ENCODE measurements at regions of chr4 and their contacts with region 1.

Region 1: GRCh38 chr4:184825896-184826690 is at the start of gene ACSL1:
- DNase-seq: peak; percentile 76
- H3K4me3 Mint-ChIP-seq: peak within 1 kb of the TSS; percentile 84
- H3K27ac Mint-ChIP-seq: peak within 1 kb of the TSS; percentile 57
- H3K4me1 Mint-ChIP-seq: peaks cover 31% of the 10 kb centered on the region
- H3K27me3 Mint-ChIP-seq: no peaks in the 10 kb centered on the region
- total RNA-seq, gene ACSL1: 29.8 to 31.9 TPM

Region 2: DNA sequence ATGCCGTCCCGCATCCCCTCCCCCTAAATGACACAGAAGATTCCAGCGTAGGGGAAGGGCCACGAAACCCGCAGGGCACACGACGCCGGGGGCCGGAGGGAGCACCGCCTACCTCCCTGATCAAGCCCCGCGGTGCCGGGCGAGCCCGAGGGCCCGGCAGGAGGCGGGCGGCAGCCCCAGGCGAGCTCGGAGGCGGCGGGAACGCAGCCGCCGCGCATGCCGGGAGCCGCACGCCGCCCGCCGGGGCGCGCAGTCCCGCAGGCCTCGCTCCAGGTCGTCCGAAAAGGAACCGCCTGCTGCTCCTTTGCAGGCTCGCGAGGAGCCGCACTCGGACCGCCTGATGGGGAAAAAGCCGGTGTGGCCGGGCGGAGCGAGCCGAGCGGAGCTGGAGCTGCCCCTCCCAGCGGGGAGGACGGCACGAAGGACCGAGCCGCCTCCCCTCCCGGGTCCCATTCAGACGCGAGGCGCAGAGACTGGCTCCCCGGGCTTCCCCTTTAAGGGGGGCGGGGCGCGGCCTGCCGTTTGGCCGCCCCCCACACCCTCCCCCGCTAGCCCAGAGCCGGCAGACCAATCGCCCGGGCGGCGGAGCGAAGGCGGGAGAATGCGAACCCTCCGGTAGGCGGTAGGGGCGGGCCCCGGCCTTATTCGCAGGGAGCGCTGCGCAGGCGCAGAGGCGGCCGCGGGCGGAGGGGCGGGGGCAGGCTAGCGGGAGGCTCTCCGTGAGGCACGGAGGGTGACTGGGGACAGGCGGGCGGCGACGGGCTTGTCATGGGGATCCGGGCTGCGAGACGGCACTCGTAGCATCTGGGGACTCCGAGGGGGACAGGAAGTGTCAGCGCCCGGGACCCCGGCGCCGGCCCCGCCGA is 1321.8 kb before region 1 on chr4:
- CTCF ChIA-PET with region 1: no interaction called
- intact Hi-C with region 1: loop called (anchors 10 kb)
- DNase-seq: peak; percentile 98
- H3K4me3 Mint-ChIP-seq: peak overlapping the region; percentile 91
- H3K27ac Mint-ChIP-seq: peak overlapping the region; percentile 93
- H3K4me1 Mint-ChIP-seq: peaks cover 39% of the 10 kb centered on the region
- H3K27me3 Mint-ChIP-seq: no peaks in the 10 kb centered on the region

Region 3: DNA sequence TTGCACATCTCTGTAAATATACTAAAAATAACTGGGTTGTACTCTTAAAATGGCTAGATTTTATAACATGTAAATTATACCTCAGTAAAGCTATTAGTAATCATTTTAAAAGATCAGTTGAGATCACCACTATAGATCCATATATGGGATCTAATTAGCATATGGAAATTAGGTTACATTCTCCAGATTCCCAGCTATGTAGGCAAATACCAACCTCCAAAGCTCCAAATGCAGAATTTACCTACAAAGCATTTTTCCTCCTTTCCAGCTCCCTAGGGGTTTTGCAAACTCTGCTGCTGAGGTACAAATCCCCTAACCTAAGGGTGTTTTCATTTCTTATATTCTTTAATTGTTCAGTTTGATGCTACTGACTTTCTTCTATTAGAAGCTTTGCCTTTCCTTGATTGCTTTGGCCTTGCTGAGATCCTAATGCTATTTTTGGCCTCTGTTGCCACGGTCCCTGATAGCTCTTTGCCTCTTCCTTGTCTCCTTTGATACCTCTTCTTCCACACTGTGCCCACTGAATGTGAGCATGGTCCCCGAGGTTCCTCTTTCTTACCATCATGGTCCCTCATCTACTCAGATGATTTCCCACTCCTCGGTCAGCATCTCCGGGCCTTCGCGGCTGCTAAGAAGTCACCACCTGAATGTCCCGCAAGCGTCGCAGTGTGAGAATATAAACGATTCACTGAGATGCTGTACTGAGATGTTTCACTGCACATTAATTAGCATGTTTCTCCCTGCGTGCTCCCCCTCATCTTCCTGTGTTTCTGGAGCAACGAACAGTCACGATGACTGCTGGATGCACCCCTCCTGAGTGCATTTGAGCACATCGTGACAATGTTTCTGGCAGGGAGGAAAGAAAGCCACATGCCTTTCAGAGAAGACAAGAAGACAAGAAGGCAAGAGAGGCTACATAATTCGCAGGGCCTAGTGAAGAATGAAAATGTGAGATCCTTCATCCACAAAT is 632.3 kb before region 1 on chr4:
- CTCF ChIA-PET with region 1: no interaction called
- intact Hi-C with region 1: no loop called
- DNase-seq: no peak
- H3K4me3 Mint-ChIP-seq: no peak overlapping the region
- H3K27ac Mint-ChIP-seq: no peak overlapping the region
- H3K4me1 Mint-ChIP-seq: no peaks in the 10 kb centered on the region
- H3K27me3 Mint-ChIP-seq: no peaks in the 10 kb centered on the region

Region 4: GRCh38 chr4:184649026-184649970 is 176.8 kb before region 1 on chr4 and contains the starts of genes CASP3 and PRIMPOL:
- CTCF ChIA-PET with region 1: no interaction called
- intact Hi-C with region 1: loop called (anchors 1 kb)
- DNase-seq: peak; percentile 97
- H3K4me3 Mint-ChIP-seq: peak within 1 kb of the TSS; percentile 93
- H3K27ac Mint-ChIP-seq: peak within 1 kb of the TSS; percentile 90
- H3K4me1 Mint-ChIP-seq: peaks cover 50% of the 10 kb centered on the region
- H3K27me3 Mint-ChIP-seq: no peaks in the 10 kb centered on the region
- total RNA-seq, gene CASP3: 27.5 to 27.9 TPM
- total RNA-seq, gene PRIMPOL: 17.9 to 18.1 TPM

Region 5: GRCh38 chr4:184762100-184762499 is 64.0 kb before region 1 on chr4:
- CTCF ChIA-PET with region 1: no interaction called
- intact Hi-C with region 1: loop called (anchors 2 kb)
- DNase-seq: peak; percentile 56
- H3K4me3 Mint-ChIP-seq: peak overlapping the region; percentile 24
- H3K27ac Mint-ChIP-seq: peak overlapping the region; percentile 83
- H3K4me1 Mint-ChIP-seq: peaks cover 22% of the 10 kb centered on the region
- H3K27me3 Mint-ChIP-seq: no peaks in the 10 kb centered on the region

Region 6: DNA sequence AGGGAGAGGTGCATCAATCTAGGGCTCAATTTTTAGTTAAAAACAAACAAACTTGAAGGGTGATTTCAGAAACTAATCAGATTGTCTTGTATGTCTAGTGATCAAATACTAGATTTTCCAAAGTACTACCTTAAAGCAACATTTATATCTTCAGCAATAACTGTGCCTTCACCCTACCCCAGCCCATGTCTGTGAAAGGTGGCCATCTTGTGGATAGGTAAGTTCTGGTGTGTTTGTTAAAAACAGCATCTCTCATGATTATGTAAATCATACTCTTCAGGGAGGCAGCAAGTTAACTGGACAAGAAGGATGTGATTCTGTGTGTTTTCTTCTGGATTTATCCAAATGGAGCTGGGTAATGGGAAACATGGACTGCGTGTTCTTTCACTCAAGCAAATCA is 81.1 kb after region 1 on chr4:
- CTCF ChIA-PET with region 1: no interaction called
- intact Hi-C with region 1: loop called (anchors 5 kb)
- DNase-seq: peak; percentile 48
- H3K4me3 Mint-ChIP-seq: no peak overlapping the region
- H3K27ac Mint-ChIP-seq: peak overlapping the region; percentile 14
- H3K4me1 Mint-ChIP-seq: peaks cover 7% of the 10 kb centered on the region
- H3K27me3 Mint-ChIP-seq: no peaks in the 10 kb centered on the region

Region 7: GRCh38 chr4:185471235-185472102 is 645.4 kb after region 1 on chr4 and contains the start of gene CCDC110:
- CTCF ChIA-PET with region 1: no interaction called
- intact Hi-C with region 1: loop called (anchors 1 kb)
- DNase-seq: peak; percentile 93
- H3K4me3 Mint-ChIP-seq: peak within 1 kb of the TSS; percentile 84
- H3K27ac Mint-ChIP-seq: peak within 1 kb of the TSS; percentile 26
- H3K4me1 Mint-ChIP-seq: peaks cover 2% of the 10 kb centered on the region
- H3K27me3 Mint-ChIP-seq: peaks cover 4% of the 10 kb centered on the region
- total RNA-seq, gene CCDC110: 0.25 to 0.57 TPM